ENCODE measurements at regions of chr1 and their contacts with region 1.

Region 1: DNA sequence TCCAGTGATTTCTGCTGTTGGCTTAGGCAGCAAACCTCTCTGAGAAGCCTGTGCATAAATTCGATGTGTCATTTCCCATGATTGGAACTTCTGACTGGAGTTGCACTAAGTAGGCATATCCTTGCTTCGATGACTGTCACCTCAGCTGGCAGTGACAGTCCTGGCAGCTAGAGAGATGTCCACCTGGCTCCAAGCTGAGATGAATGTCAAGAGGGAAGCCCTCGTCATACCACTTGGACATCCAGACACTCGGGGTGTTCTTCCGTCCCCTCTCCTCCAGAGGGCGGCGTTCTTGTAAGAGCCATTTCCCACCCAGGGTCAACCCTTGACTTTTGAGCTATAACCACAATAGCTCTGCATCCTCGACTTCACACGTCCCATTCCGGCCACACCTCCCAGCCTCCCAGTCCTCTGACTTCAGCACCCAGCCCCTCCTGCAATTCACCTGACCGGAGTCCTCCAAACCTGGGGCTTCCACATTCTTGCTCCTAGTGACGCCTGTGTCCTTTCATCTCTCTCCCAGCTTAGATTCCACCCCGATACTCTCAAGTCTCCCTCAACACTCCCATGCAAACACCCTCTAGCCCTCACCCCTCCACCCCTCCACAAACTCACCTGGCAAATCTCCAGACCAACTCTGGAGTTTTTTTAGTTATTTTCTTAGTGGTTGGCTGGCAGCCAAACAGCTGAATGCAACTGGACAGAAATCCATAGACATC is 17.3 kb downstream of the CA6 start:
- DNase-seq: peak; percentile 80
- ATAC-seq: peak; percentile 75
- H3K4me3 Mint-ChIP-seq: peak overlapping the region; percentile 45
- H3K27ac Mint-ChIP-seq: peak overlapping the region; percentile 80
- H3K4me1 Mint-ChIP-seq: peaks cover 79% of the 10 kb centered on the region
- H3K27me3 Mint-ChIP-seq: no peaks in the 10 kb centered on the region

Region 2: GRCh38 chr1:8925406-8925805 is 37.6 kb before region 1 on chr1:
- CTCF ChIA-PET with region 1: interaction called, 32 read pairs
- DNase-seq: no peak
- ATAC-seq: no peak
- H3K4me3 Mint-ChIP-seq: no peak overlapping the region
- H3K27ac Mint-ChIP-seq: no peak overlapping the region
- H3K4me1 Mint-ChIP-seq: peaks cover 33% of the 10 kb centered on the region
- H3K27me3 Mint-ChIP-seq: no peaks in the 10 kb centered on the region

Region 3: GRCh38 chr1:8941906-8942305 is 21.1 kb before region 1 on chr1:
- CTCF ChIA-PET with region 1: interaction called, 26 read pairs
- DNase-seq: no peak
- ATAC-seq: no peak
- H3K4me3 Mint-ChIP-seq: peak overlapping the region; percentile 33
- H3K27ac Mint-ChIP-seq: peak overlapping the region; percentile 74
- H3K4me1 Mint-ChIP-seq: peaks cover 88% of the 10 kb centered on the region
- H3K27me3 Mint-ChIP-seq: no peaks in the 10 kb centered on the region

Region 4: DNA sequence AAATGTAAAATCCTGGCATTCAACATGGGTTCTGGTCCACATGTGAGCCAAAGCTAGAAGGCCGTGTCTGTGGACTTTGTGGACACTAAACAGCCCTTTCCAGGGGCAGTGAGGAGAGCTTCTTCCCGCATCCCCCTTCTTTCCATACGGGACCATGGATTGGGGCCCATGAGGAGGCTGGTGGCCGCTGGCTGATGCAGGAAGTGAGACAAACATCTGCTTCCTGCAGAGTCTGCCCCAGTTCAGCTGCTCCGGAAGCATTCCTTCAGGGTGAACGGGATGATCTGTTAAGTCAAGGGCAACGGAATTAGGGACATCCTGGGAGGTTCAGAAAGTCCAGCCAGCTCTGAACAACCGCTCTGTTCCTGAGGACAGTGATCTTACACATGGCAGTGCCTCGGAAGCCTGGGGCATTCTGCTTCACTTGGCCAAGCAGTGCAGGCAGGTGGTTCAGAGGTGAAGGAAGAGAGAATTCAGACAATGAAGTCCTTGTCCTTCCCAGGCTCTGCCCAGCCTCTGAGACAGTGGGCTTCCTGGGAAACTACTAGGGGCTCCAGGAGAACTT is 15.8 kb before region 1 on chr1:
- CTCF ChIA-PET with region 1: interaction called, 26 read pairs
- DNase-seq: no peak
- ATAC-seq: peak; percentile 17
- H3K4me3 Mint-ChIP-seq: no peak overlapping the region
- H3K27ac Mint-ChIP-seq: peak overlapping the region; percentile 97
- H3K4me1 Mint-ChIP-seq: peaks cover 82% of the 10 kb centered on the region
- H3K27me3 Mint-ChIP-seq: no peaks in the 10 kb centered on the region

Region 5: DNA sequence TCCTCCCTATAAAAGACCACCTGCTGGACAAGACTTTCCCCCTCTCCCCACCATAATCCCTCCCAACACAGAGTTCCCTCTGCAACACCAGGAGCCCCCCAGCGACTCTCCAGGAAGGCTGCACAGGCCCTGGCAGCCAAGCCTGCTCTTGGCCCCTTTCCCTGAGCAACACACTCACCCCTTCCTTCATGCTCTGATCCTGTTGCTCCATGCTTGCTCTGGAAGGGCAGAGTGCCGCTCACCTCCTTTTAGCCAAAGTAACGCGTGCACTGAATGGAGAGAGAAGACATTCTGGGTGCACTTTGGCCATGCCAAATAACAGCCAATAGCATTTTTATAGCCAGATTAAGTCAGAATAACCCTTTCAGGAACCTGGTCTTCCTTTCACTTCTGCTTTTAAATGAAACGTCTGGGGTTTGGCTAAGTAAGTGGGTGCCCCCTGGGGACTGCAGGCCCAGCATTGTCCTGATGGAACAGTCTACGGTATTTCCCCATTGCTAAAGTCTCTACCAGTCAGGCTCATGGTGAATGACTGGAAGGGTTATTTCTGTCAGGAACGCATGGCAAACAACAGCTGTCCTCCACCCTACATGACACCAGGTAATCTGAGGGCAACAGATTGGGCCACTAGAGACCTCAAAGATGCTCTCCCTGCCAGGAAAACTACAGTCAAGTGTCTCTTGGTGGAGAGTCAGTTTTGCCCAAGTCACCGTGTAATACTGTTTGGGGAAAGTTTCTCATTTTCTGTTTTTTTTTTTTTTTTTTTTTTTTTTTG is 106.5 kb after region 1 on chr1 and contains the start of gene SLC2A5:
- CTCF ChIA-PET with region 1: no interaction called
- DNase-seq: no peak
- ATAC-seq: no peak
- H3K4me3 Mint-ChIP-seq: no peak within 1 kb of the TSS
- H3K27ac Mint-ChIP-seq: no peak within 1 kb of the TSS
- H3K4me1 Mint-ChIP-seq: peaks cover 13% of the 10 kb centered on the region
- H3K27me3 Mint-ChIP-seq: peaks cover 33% of the 10 kb centered on the region
- total RNA-seq, gene SLC2A5: not detected